ENCODE measurements at regions of chr4 and their contacts with region 1.

Region 1: GRCh38 chr4:186845137-186845842 is 121.6 kb upstream of the FAT1 start:
- DNase-seq: peak; percentile 38
- H3K4me3 Mint-ChIP-seq: peak overlapping the region; percentile 65
- H3K27ac Mint-ChIP-seq: peak overlapping the region; percentile 93
- H3K4me1 Mint-ChIP-seq: peaks cover 9% of the 10 kb centered on the region
- H3K27me3 Mint-ChIP-seq: no peaks in the 10 kb centered on the region
- CTCF ChIP-seq: no peak

Region 2: GRCh38 chr4:186634591-186635128 is 210.6 kb before region 1 on chr4:
- CTCF ChIA-PET with region 1: no interaction called
- intact Hi-C with region 1: no loop called
- DNase-seq: no peak
- H3K4me3 Mint-ChIP-seq: no peak overlapping the region
- H3K27ac Mint-ChIP-seq: no peak overlapping the region
- H3K4me1 Mint-ChIP-seq: no peaks in the 10 kb centered on the region
- H3K27me3 Mint-ChIP-seq: no peaks in the 10 kb centered on the region
- CTCF ChIP-seq: no peak

Region 3: GRCh38 chr4:186765138-186765537 is 80.2 kb before region 1 on chr4:
- CTCF ChIA-PET with region 1: interaction called, 3 read pairs
- intact Hi-C with region 1: loop called (anchors 2 kb)
- DNase-seq: peak; percentile 75
- H3K4me3 Mint-ChIP-seq: peak overlapping the region; percentile 46
- H3K27ac Mint-ChIP-seq: peak overlapping the region; percentile 89
- H3K4me1 Mint-ChIP-seq: peaks cover 21% of the 10 kb centered on the region
- H3K27me3 Mint-ChIP-seq: no peaks in the 10 kb centered on the region
- CTCF ChIP-seq: no peak

Region 4: GRCh38 chr4:186936496-186937375 is 91.4 kb after region 1 on chr4:
- CTCF ChIA-PET with region 1: no interaction called
- intact Hi-C with region 1: loop called (anchors 2 kb)
- DNase-seq: peak; percentile 22
- H3K4me3 Mint-ChIP-seq: peak overlapping the region; percentile 59
- H3K27ac Mint-ChIP-seq: peak overlapping the region; percentile 97
- H3K4me1 Mint-ChIP-seq: peaks cover 47% of the 10 kb centered on the region
- H3K27me3 Mint-ChIP-seq: no peaks in the 10 kb centered on the region
- CTCF ChIP-seq: no peak

Measured in Calu3 (cell line).